Activated CD4-positive, alpha-beta T cell treated with anti-CD3 and anti-CD28 coated beads, Interleukin-2, amount 10 ng/mL, durations not matched to agents 24 days and 14 days (primary cell): ENCODE measurements at regions of chr4 and their contacts with region 1.

Region 1: DNA sequence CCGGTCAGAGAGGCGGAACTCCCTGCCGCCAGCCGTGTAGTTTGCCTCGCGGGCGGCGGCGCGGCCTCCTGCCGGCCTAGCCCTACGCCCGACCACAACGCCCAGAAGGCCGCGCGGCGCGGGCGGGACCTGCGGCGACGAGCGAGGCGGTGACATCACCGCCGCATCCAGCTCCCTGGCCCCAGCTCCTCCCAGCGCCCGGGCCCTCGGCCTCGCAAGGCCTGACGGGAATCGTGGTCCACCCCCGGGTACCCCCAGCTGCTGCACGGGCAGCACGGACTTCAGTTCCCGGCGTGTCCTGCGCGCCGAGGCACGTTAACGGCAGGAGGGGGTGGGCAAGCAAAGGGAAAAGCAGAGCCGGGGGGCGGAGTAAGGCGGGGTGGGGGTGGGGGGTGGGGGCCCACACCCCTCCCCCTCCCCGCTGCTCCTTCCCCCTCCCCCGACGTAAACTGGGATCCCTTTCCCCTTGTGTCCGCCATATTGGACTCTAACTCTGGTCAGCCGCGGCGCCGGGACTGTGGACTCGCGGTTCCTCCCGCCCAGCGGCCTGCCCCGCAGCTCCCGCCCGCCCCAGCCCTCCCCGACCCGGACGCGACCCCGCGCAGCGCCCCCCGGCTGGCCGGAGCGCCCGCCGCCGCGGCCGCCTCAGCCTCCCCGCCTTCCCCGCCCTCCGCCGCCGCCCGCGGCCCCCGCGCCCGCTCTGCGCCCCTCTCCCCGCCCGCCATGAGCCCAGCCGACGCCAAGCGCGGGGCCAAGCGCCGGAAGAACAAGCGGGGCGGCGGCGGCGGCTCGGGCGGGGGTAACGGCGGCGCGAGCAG is at the start of gene FAM193A:
- DNase-seq: peak; percentile 100
- H3K4me3 Mint-ChIP-seq: peak within 1 kb of the TSS; percentile 92
- H3K27ac Mint-ChIP-seq: peak within 1 kb of the TSS; percentile 95
- H3K4me1 Mint-ChIP-seq: peaks cover 11% of the 10 kb centered on the region
- H3K27me3 Mint-ChIP-seq: no peaks in the 10 kb centered on the region
- total RNA-seq, gene FAM193A: 29.5 and 30.1 TPM in 2 replicates

Region 2: DNA sequence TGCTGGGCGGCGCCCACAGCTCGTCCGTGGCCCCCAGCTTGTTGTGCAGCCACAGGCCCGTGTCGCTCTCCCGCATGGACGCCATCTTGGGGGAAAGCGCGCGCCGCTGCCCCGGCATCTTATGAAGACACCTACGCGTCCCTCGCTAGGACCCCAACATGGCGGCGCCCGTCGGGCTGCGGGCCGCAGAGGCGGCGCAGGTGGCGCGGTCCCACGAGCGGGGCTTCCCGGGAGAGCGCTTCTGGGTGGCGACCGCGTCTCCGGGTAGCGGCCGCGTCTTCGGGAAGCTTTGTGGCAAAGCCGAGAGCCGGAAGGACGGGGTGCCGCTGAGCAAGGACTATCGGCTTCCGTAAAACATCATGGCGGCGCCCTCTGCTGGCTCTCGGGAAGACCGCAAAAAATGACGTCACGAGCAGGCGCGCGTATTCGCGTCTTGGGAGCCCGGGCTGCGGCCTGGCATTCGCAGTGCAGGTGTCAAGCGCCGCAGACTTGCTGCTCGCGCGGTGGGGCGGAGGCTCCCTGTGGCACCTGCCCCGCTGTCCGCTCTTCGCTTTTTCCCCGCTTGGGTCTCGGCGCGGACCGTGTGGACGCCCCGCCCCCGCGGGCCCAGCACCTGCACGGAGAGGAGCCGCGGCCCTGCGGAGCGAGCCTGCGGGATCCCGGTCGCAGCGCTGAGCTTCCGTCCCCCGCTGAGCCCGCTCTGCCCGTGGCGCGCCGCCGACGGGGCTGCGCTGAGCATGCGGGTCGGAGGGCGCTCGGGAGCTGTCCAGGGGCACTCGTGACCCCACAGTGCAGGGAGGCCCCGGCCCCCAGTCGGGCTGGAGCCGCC is 527.3 kb before region 1 on chr4 and contains the start of gene NELFA:
- intact Hi-C with region 1: loop called (anchors 1 kb)
- DNase-seq: peak; percentile 98
- H3K4me3 Mint-ChIP-seq: peak within 1 kb of the TSS; percentile 91
- H3K27ac Mint-ChIP-seq: peak within 1 kb of the TSS; percentile 91
- H3K4me1 Mint-ChIP-seq: peaks cover 26% of the 10 kb centered on the region
- H3K27me3 Mint-ChIP-seq: peaks cover 10% of the 10 kb centered on the region
- total RNA-seq, gene NELFA: 51.1 and 57.4 TPM in 2 replicates

Region 3: DNA sequence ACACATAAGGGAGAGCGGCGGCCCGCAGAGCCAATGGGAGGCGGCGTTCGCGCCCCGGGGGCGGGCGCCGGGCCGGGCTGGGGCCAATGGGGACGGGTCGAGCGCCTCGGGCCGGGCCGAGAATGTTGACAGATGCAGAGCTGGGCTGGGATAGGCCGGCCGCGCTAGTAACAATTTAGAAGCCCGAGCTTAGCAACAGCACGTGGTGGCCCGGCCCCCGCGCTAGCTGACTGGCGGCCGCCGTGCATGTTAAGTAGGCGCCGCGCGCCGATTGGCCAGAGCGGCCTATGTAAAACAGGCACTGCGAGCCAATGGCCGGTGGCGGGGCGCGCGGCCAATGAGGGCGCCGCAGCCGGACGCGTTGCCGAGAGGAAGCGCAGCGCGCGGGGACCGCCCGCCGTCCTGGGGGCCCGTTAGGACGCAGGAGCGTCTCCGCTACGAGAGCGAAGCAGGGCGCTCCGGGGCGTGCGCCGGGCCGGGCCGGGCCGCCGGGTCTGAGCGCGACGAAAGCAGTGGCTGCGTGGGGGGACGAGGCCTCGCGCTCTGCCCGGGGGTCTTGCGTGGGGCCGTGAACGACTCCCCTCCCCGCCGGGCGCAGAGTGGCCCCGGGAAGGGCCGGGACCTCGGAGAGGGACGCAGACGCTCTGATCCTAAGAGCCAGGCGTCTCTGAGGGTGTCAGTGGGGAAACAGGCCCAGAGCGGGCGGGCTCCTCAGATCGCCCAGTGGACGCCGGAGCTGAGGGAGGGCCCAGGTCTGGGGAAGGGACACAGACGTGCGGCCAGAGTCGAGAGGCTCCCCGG is 274.1 kb before region 1 on chr4:
- intact Hi-C with region 1: loop called (anchors 2 kb)
- DNase-seq: peak; percentile 99
- H3K4me3 Mint-ChIP-seq: peak overlapping the region; percentile 76
- H3K27ac Mint-ChIP-seq: peak overlapping the region; percentile 82
- H3K4me1 Mint-ChIP-seq: no peaks in the 10 kb centered on the region
- H3K27me3 Mint-ChIP-seq: no peaks in the 10 kb centered on the region

Region 4: GRCh38 chr4:2468445-2469192 is 67.8 kb before region 1 on chr4 and contains the start of gene RNF4:
- intact Hi-C with region 1: loop called (anchors 1 kb)
- DNase-seq: peak; percentile 98
- H3K4me3 Mint-ChIP-seq: peak within 1 kb of the TSS; percentile 90
- H3K27ac Mint-ChIP-seq: peak within 1 kb of the TSS; percentile 99
- H3K4me1 Mint-ChIP-seq: peaks cover 30% of the 10 kb centered on the region
- H3K27me3 Mint-ChIP-seq: peaks cover 4% of the 10 kb centered on the region
- total RNA-seq, gene RNF4: 94.8 and 95.4 TPM in 2 replicates

Region 5: GRCh38 chr4:2689825-2690700 is 153.7 kb after region 1 on chr4:
- intact Hi-C with region 1: loop called (anchors 5 kb)
- DNase-seq: no peak
- H3K4me3 Mint-ChIP-seq: no peak overlapping the region
- H3K27ac Mint-ChIP-seq: peak overlapping the region; percentile 77
- H3K4me1 Mint-ChIP-seq: peaks cover 26% of the 10 kb centered on the region
- H3K27me3 Mint-ChIP-seq: no peaks in the 10 kb centered on the region

Region 6: GRCh38 chr4:2934813-2935761 is 398.7 kb after region 1 on chr4:
- intact Hi-C with region 1: loop called (anchors 5 kb)
- DNase-seq: peak; percentile 99
- H3K4me3 Mint-ChIP-seq: peak overlapping the region; percentile 90
- H3K27ac Mint-ChIP-seq: peak overlapping the region; percentile 93
- H3K4me1 Mint-ChIP-seq: peaks cover 42% of the 10 kb centered on the region
- H3K27me3 Mint-ChIP-seq: no peaks in the 10 kb centered on the region